ENCODE measurements at regions of chr4 and their contacts with region 1.

Region 1: DNA sequence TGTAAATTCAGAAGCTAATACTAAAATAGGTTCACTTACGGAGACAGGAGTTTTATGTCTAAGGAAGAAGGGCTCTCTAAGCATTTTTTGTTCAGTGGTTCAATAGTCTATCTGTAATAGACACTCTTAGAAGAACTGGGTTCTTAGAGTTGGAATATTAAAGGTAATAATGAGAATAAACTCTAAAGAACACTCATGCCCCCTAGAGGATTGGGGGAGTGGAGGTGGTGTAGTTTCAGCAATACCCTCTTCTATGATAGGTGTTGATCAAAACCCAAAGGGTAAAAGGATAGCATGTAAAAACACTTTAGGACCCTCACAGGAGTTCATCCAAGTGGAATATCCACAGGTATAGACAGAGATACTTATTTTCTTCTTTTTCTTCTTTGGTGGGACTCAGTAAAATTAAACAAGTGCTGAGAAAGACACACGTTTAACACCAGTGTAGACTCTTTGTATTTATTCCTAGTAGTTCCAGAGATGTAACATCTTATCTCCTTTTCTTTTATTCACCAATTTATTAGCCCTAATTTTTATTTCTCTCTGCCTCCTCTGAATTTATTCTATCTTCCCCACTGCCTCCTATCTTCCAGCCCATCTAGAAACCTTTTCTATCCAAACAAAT is 25.7 kb upstream of the MND1 start:
- DNase-seq: peak in 4 of 7 donors; percentile 23 to 59 (median 42)
- H3K4me3 ChIP-seq: no peak overlapping the region
- H3K27ac ChIP-seq: no peak overlapping the region
- H3K4me1 ChIP-seq: no peaks in the 10 kb centered on the region
- H3K27me3 ChIP-seq: no peaks in the 10 kb centered on the region
- CTCF ChIP-seq: peak; percentile 63 to 76 (median 71)
- POLR2A ChIP-seq: no peak

Region 2: GRCh38 chr4:153131596-153131995 is 187.2 kb before region 1 on chr4:
- intact Hi-C with region 1: no loop called
- DNase-seq: no peak
- H3K4me3 ChIP-seq: no peak overlapping the region
- H3K27ac ChIP-seq: no peak overlapping the region
- H3K4me1 ChIP-seq: no peaks in the 10 kb centered on the region
- H3K27me3 ChIP-seq: no peaks in the 10 kb centered on the region
- CTCF ChIP-seq: no peak
- POLR2A ChIP-seq: no peak

Region 3: DNA sequence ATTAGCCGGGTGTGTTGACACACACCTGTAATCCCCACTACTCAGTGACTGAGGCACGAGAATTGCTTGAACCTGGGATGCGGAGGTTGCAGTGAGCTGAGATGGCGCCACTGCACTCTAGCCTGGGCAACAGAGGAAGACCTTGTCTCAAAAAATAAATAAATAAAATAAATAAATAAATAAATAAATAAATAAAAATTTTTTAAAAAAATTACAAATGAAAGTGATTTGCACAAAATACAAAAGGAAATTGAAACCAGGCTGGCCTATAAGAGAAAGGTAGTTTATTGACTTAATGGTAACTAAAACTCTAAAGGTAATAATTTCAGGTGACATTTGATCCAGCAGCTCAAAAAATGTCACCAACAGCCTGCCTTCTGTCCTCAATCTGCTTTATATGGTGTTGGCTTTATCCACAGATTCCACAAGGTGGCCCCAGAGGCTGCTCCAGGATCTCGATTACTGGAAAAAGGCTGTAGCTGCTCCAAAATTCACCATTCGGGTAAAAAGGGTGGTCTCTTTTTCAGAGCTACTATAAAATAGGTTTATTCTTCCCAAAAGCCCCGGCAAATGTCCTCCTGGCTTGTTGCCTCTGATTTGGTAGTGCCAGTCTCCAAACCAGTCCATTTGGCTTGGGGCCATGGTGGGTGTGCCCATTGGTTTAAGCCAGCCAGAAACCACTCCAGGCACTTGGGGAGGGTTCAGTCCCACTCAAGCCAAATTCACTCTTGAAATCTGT is 175.9 kb before region 1 on chr4:
- intact Hi-C with region 1: loop called (anchors 5 kb)
- DNase-seq: peak; percentile 72 to 88 (median 81)
- H3K4me3 ChIP-seq: no peak overlapping the region
- H3K27ac ChIP-seq: peak overlapping the region in 1 of 5 donors; percentile 28
- H3K4me1 ChIP-seq: peaks cover 9 to 14% of the 10 kb centered on the region in 2 donors
- H3K27me3 ChIP-seq: no peaks in the 10 kb centered on the region
- CTCF ChIP-seq: peak; percentile 62 to 94 (median 88)
- POLR2A ChIP-seq: no peak

Region 4: GRCh38 chr4:153166716-153167501 is 151.9 kb before region 1 on chr4:
- intact Hi-C with region 1: no loop called
- DNase-seq: no peak
- H3K4me3 ChIP-seq: no peak overlapping the region
- H3K27ac ChIP-seq: no peak overlapping the region
- H3K4me1 ChIP-seq: no peaks in the 10 kb centered on the region
- H3K27me3 ChIP-seq: peaks cover 3% of the 10 kb centered on the region
- CTCF ChIP-seq: no peak
- POLR2A ChIP-seq: no peak

Region 5: DNA sequence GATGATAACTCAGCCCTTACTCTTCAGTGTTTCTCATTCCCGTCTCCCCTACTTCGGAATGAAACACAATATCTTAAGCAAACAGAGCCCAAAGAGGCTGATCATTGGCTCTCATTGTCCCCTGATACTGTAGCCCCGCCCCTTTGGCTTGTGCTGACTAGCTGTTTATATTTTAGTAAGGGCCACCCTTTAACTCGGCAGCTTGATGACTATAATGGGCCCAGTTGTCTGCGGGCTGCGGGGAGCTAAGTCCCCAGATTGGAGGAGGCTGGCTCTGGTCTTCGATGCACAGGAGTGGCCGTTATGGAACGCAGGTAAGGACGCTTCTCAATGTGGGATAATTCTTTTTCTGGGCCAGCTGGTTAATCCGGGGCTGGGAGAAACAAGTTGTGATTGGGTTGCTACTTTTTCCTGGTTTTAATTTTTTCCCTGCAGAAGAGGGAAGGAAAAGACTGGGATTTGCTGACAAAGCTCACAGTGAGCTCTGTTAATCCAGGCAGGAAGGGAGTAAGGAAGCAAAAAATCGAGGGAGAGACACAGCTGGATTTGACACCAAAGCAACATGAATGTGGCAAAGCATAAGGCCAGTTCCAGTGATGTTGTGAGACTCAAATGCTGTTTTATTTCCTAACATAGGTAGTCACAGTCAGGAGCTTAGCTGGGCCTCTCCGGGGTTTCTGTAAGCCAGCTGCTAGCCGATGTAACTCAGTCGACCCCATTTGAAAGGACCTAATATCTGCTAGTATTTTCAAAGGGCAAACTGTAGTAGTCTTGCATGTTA is 114.4 kb before region 1 on chr4 and contains the start of gene TRIM2:
- intact Hi-C with region 1: loop called (anchors 5 kb)
- DNase-seq: peak in 6 of 7 donors; percentile 35 to 76 (median 53)
- H3K4me3 ChIP-seq: peak within 1 kb of the TSS in 1 of 4 donors; percentile 25
- H3K27ac ChIP-seq: no peak within 1 kb of the TSS
- H3K4me1 ChIP-seq: no peaks in the 10 kb centered on the region
- H3K27me3 ChIP-seq: no peaks in the 10 kb centered on the region
- CTCF ChIP-seq: no peak
- POLR2A ChIP-seq: no peak
- total RNA-seq, gene TRIM2: 22.2 to 130 (median 48.5) TPM

Region 6: DNA sequence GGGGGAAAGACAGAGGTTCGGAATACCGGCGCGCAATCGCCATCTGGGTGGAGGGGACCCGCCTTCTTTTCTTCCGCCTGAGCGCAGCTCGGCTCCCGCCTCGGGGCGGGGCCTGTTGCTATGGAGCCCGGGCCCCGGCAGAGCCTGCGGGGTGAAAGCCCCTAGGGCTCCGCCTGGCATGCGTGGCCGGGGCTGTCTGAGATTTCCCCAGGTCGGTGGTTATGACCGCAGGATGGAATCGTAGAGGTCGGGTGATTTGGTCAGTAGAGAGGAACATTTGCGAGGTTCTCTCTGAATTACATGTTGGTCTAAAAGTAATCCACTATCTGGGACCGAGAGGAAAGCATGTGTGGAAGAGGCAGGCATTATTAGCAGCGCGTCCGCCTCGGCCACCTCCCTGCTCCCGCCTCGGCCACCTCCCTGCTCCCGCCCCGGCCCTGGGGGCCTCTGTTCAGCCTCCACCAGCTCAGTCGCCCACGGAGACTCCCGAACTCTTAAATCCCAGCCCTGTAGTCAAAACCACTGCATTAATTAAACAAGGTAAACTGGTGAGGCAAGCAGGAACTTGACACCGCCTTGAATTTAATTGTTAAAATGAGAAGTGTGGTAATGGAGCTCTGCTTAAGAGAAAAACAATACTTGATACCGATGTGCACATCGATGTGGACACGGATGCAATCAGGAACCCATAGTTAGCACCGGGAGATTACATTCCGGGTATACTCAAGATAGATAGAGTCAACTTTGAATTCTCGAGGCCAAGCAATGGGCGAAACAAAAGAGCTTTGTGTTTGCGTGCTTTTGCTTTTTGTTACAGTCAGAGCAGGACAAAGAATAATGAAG is 69.4 kb before region 1 on chr4:
- intact Hi-C with region 1: loop called in 1 of 2 experiments (anchors 10 kb)
- DNase-seq: peak; percentile 70 to 81 (median 77)
- H3K4me3 ChIP-seq: peak overlapping the region in 3 of 4 donors; percentile 0 to 68 (median 38)
- H3K27ac ChIP-seq: peak overlapping the region in 3 of 5 donors; percentile 9 to 59 (median 53)
- H3K4me1 ChIP-seq: peaks cover 4 to 33% of the 10 kb centered on the region in 2 donors
- H3K27me3 ChIP-seq: no peaks in the 10 kb centered on the region
- CTCF ChIP-seq: no peak
- POLR2A ChIP-seq: no peak